Mammary epithelial cell (primary cell): ENCODE measurements at regions of chr17 and their contacts with region 1.

Region 1: DNA sequence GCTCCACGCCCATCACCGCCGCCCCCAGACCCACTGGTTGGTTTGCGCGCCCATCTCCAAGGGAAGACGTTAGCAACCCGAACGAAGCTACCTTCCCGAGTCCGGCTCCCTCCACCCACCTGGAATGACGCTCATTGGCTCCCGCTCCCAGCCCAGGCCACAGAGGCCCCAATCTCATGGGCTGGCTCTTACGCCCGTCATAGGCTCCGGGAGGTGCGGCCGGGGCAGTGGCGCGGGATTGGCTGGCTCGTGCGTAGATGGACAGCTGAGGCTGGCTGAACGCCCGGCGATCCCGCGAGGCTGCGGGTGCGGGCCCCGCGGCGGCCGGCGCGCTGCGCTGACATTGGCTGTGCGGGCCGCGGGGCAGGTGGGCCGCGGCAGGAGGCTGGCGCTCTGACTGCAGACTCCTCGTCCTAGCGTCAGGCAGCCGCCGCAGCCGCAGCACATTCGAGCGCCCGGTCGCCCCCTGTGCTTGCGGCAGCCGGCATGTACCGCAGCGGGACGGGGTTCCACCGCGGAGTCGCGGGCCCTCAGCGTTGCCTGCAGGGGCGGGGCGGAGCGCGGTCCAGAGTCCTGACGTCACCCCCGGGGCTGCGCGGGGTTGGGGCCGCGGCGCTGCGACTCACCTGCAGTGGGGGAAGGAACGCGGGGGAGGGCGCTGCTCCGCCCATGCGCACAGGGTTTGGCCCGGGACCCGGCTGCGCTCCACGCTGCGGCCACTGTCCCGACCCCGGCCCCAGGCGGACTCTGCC is 453 bp upstream of the MYH10 start:
- DNase-seq: peak; percentile 100
- H3K4me3 ChIP-seq: peak overlapping the region; percentile 79 to 100 (median 99)
- H3K27ac ChIP-seq: peak overlapping the region; percentile 70
- H3K4me1 ChIP-seq: peaks cover 11% of the 10 kb centered on the region
- H3K27me3 ChIP-seq: no peaks in the 10 kb centered on the region
- CTCF ChIP-seq: peak in 1 of 2 donors; percentile 18

Region 2: GRCh38 chr17:8079291-8080207 is 551.4 kb before region 1 on chr17:
- CTCF ChIA-PET with region 1: no interaction called
- dilution Hi-C with region 1: no loop called
- in situ Hi-C with region 1: no loop called
- intact Hi-C with region 1: loop called (anchors 10 kb)
- DNase-seq: peak; percentile 61
- H3K4me3 ChIP-seq: peak overlapping the region; percentile 28 to 57 (median 52)
- H3K27ac ChIP-seq: no peak overlapping the region
- H3K4me1 ChIP-seq: peaks cover 19% of the 10 kb centered on the region
- H3K27me3 ChIP-seq: no peaks in the 10 kb centered on the region
- CTCF ChIP-seq: peak; percentile 54 to 85

Region 3: GRCh38 chr17:8409966-8410864 is 220.8 kb before region 1 on chr17:
- CTCF ChIA-PET with region 1: no interaction called
- dilution Hi-C with region 1: no loop called
- in situ Hi-C with region 1: no loop called
- intact Hi-C with region 1: no loop called
- DNase-seq: peak; percentile 89
- H3K4me3 ChIP-seq: peak overlapping the region; percentile 2 to 30 (median 24)
- H3K27ac ChIP-seq: peak overlapping the region; percentile 31
- H3K4me1 ChIP-seq: peaks cover 16% of the 10 kb centered on the region
- H3K27me3 ChIP-seq: no peaks in the 10 kb centered on the region
- CTCF ChIP-seq: peak; percentile 81 to 87

Region 4: DNA sequence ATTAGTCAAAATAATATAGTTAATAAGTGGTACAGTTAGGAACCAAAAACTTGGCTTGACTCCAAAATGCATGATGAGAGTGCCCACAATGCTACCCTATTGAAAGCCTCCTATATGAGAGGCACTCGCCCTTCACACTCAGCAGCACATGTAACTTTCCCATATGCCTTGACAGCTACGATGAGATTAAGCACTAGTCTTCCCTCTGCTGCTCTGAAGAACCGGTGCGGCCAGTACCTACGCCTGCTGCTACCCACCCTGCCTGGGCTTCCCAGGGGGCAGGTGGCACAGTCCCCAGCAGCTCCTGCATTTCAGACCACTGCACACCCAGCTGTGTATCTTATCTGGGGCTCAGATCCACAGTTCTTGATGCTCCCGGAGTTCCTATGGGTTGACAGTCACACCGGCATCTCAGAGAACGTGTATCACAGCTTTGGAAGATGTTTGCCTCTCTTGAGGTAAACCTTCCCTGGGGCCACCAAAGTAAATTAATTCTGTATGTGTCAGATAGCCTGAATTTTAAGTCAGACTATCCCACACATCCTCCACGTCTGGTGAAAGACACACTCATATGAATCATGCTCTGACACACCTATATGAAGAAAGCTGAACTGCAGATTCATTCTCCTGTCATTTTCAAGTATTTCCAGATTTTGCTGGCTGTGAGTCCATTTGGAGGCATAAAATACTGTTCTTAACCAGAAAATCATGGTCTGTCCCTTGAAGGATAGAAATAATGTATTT is 78.2 kb before region 1 on chr17:
- CTCF ChIA-PET with region 1: no interaction called
- dilution Hi-C with region 1: no loop called
- in situ Hi-C with region 1: no loop called
- intact Hi-C with region 1: loop called (anchors 1 kb)
- DNase-seq: peak; percentile 90
- H3K4me3 ChIP-seq: no peak overlapping the region
- H3K27ac ChIP-seq: peak overlapping the region; percentile 61
- H3K4me1 ChIP-seq: peaks cover 17% of the 10 kb centered on the region
- H3K27me3 ChIP-seq: no peaks in the 10 kb centered on the region
- CTCF ChIP-seq: no peak

Region 5: DNA sequence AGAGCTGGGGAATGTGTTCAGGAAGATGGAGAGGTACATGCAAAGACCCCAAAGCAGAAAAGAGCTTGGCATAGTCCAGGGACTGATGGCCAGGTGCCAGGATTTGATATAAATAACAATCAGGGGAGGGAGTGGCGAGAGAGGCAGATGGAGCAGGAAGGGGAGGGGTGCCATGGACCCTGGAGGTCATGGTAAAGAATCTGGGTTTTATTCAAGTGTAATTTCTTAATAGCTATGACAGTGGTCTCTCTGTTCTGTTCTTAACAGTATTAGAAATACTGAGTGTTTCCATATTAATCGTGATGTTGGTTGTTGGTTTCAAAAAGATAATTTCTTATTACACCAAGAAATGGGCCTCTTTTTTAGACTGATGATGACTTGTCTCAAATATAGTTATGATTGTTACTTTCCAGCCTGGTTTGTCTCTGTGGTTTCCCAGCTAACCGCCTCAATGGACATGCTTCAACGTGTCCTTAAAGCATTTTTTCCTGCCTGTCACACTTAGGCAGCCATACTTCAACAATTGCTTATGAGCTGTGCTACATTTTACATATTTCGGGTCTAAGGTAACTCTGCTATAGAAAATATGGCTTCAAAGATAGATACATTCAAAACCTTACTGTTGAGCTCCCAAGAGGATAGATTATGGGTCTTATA is 49.8 kb before region 1 on chr17:
- CTCF ChIA-PET with region 1: no interaction called
- dilution Hi-C with region 1: no loop called
- in situ Hi-C with region 1: no loop called
- intact Hi-C with region 1: loop called (anchors 2 kb)
- DNase-seq: peak; percentile 85
- H3K4me3 ChIP-seq: no peak overlapping the region
- H3K27ac ChIP-seq: peak overlapping the region; percentile 72
- H3K4me1 ChIP-seq: peaks cover 24% of the 10 kb centered on the region
- H3K27me3 ChIP-seq: no peaks in the 10 kb centered on the region
- CTCF ChIP-seq: no peak

Region 6: GRCh38 chr17:8614988-8615387 is 16.0 kb before region 1 on chr17:
- CTCF ChIA-PET with region 1: no interaction called
- dilution Hi-C with region 1: no loop called
- in situ Hi-C with region 1: no loop called
- intact Hi-C with region 1: loop called (anchors 2 kb)
- DNase-seq: no peak
- H3K4me3 ChIP-seq: no peak overlapping the region
- H3K27ac ChIP-seq: no peak overlapping the region
- H3K4me1 ChIP-seq: no peaks in the 10 kb centered on the region
- H3K27me3 ChIP-seq: no peaks in the 10 kb centered on the region
- CTCF ChIP-seq: no peak

Region 7: GRCh38 chr17:8745586-8746500 is 114.9 kb after region 1 on chr17:
- CTCF ChIA-PET with region 1: no interaction called
- dilution Hi-C with region 1: no loop called
- in situ Hi-C with region 1: no loop called
- intact Hi-C with region 1: loop called (anchors 5 kb)
- DNase-seq: peak; percentile 22
- H3K4me3 ChIP-seq: peak overlapping the region; percentile 47 to 65 (median 56)
- H3K27ac ChIP-seq: no peak overlapping the region
- H3K4me1 ChIP-seq: peaks cover 5% of the 10 kb centered on the region
- H3K27me3 ChIP-seq: no peaks in the 10 kb centered on the region
- CTCF ChIP-seq: peak; percentile 25 to 82